ENCODE measurements at regions of chr1 and their contacts with region 1.

Region 1: GRCh38 chr1:156892190-156893047 is 1.1 kb upstream of the PEAR1 start:
- DNase-seq: peak; percentile 65 to 91 (median 86)
- ATAC-seq: peak; percentile 97
- H3K4me3 ChIP-seq: peak overlapping the region; percentile 33 to 36
- H3K4me3 Mint-ChIP-seq: peak overlapping the region; percentile 66
- H3K27ac ChIP-seq: no peak overlapping the region
- H3K27ac Mint-ChIP-seq: no peak overlapping the region
- H3K4me1 ChIP-seq: peaks cover 14% of the 10 kb centered on the region
- H3K4me1 Mint-ChIP-seq: peaks cover 13% of the 10 kb centered on the region
- H3K27me3 ChIP-seq: peaks cover 0 to 25% of the 10 kb centered on the region in 2 experiments
- H3K27me3 Mint-ChIP-seq: peaks cover 53% of the 10 kb centered on the region
- CTCF ChIP-seq: peak; percentile 61

Region 2: GRCh38 chr1:156368889-156369684 is 523.3 kb before region 1 on chr1 and contains the start of gene RHBG:
- CTCF ChIA-PET with region 1: no interaction called
- POLR2A ChIA-PET with region 1: no interaction called
- intact Hi-C with region 1: no loop called
- DNase-seq: peak in 3 of 9 experiments; percentile 19 to 32 (median 27)
- ATAC-seq: peak; percentile 40
- H3K4me3 ChIP-seq: peak within 1 kb of the TSS; percentile 9 to 24
- H3K4me3 Mint-ChIP-seq: peak within 1 kb of the TSS; percentile 73
- H3K27ac ChIP-seq: no peak within 1 kb of the TSS
- H3K27ac Mint-ChIP-seq: no peak within 1 kb of the TSS
- H3K4me1 ChIP-seq: no peaks in the 10 kb centered on the region
- H3K4me1 Mint-ChIP-seq: peaks cover 5% of the 10 kb centered on the region
- H3K27me3 ChIP-seq: peaks cover 5 to 10% of the 10 kb centered on the region in 2 experiments
- H3K27me3 Mint-ChIP-seq: peaks cover 46% of the 10 kb centered on the region
- CTCF ChIP-seq: no peak
- total RNA-seq, gene RHBG: not detected

Region 3: DNA sequence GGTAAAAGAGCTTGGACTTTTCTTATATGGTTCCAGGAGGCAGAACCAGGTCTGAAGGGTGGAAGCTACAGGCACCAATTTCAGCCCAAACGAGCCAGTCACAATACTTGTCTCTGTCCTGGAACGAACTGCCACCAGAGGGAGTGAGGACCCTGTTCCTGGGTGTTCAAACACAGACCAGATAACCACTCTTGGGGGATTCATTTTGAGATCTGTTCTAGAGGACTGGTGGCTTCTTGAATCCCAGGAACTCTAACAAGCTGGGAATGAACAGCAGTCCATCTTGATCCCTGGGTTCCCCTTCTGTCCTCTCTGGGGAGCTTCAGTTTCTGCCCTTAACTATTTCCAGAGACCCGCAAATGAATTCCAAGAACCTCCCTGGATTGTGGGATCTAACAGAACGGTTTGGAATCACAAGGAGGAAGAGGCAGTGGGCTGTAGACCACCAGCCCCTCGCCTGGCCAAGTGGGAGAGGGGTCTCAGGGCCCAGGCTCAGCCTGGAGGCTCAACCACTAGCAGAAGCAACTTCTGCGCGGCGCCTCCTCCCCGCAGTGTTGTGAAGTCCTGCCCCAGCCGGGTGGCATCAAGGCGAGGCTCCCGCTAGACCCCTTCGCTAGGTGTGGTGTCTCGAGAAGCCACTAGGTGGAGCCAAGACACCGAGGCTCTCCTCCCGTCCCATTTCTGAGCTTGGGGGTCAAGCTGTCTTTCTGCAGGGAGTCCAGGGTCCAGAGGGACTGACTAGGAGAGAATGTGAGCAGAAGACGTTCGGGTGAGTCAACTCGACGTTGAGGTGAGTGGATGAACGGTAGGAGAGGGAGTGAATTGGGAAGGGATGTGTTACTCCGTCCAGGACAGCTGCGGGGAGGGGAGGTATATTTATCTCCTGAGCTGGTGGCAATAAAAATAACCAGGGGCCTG is 203.1 kb before region 1 on chr1:
- CTCF ChIA-PET with region 1: interaction called, 15 read pairs
- POLR2A ChIA-PET with region 1: no interaction called
- intact Hi-C with region 1: no loop called
- DNase-seq: peak; percentile 55 to 85 (median 77)
- ATAC-seq: peak; percentile 97
- H3K4me3 ChIP-seq: no peak overlapping the region
- H3K4me3 Mint-ChIP-seq: no peak overlapping the region
- H3K27ac ChIP-seq: no peak overlapping the region
- H3K27ac Mint-ChIP-seq: no peak overlapping the region
- H3K4me1 ChIP-seq: peaks cover 21% of the 10 kb centered on the region
- H3K4me1 Mint-ChIP-seq: peaks cover 25% of the 10 kb centered on the region
- H3K27me3 ChIP-seq: peaks cover 18 to 19% of the 10 kb centered on the region in 2 experiments
- H3K27me3 Mint-ChIP-seq: peaks cover 41% of the 10 kb centered on the region
- CTCF ChIP-seq: peak; percentile 84

Region 4: DNA sequence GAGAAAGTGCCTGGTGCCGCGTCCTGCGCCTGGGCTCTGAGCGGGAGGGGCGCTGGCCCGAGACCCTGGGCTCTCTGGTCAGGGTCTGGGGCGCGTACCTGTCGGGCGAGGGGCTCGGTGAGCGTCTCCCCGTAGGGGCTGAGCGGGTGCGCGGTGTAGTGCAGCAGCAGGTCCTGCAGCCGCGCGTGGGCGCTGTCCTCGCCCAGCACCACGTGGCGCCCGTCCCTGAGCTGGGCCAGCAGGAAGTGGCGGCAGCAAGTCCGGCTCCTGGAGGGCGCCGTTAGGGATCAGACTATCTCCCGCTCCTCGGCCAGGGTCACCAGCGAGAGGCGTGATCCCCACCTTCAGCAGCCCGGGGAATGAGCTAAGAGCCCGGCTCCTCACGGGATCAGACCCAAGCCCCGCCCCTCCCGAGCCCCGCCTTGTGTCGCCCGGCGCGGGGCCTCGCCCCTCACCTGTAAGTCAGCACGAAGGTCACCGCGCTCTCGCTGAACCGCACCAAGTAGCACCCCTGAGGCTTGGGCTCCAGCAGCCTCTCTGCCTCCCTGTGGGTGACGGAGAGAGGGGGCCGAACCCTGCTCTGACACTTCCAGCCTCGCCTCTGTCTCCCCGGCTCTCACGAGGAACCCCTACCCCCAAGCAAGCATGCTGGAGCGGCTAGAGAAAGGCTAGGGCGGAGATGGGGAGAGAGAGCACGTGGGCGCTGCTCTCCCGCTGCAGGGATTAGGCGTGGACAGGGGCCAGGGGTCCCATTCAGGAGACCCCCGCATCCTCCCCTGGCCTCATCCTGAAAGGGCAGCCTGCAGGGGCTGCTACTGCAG is 78.5 kb before region 1 on chr1:
- CTCF ChIA-PET with region 1: interaction called, 4 read pairs
- POLR2A ChIA-PET with region 1: no interaction called
- intact Hi-C with region 1: loop called in 1 of 2 experiments (anchors 1 kb)
- DNase-seq: peak; percentile 47 to 90 (median 78)
- ATAC-seq: peak; percentile 56
- H3K4me3 ChIP-seq: peak overlapping the region; percentile 75
- H3K4me3 Mint-ChIP-seq: peak overlapping the region; percentile 84
- H3K27ac ChIP-seq: peak overlapping the region; percentile 91 to 99
- H3K27ac Mint-ChIP-seq: peak overlapping the region; percentile 99
- H3K4me1 ChIP-seq: peaks cover 53% of the 10 kb centered on the region
- H3K4me1 Mint-ChIP-seq: peaks cover 69% of the 10 kb centered on the region
- H3K27me3 ChIP-seq: no peaks in the 10 kb centered on the region
- H3K27me3 Mint-ChIP-seq: no peaks in the 10 kb centered on the region
- CTCF ChIP-seq: peak; percentile 68

Region 5: DNA sequence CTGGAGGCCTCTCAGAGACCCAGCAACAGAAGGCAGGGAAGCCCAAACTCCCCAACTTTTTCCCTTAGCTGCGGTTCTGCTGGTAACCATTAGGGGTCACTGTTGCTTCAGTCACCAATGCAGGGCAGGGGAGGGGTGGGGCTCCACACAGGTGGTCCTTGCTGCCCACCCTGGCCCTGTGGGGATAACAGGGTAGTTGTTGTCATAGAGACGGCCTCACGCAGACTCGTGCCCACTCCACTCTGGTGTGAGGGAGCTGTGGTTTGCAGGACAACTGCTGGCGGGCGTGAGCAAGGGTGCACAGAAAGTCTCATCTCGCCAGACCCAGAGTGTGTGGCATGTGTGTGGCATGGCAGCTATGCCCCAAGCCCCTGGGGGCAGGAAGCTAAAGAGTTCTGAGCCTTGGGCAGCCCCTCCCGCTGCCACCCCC is 53.4 kb before region 1 on chr1:
- CTCF ChIA-PET with region 1: interaction called, 69 read pairs
- POLR2A ChIA-PET with region 1: no interaction called
- intact Hi-C with region 1: loop called in 1 of 2 experiments (anchors 5 kb)
- DNase-seq: peak in 8 of 9 experiments; percentile 33 to 72 (median 54)
- ATAC-seq: peak; percentile 88
- H3K4me3 ChIP-seq: no peak overlapping the region
- H3K4me3 Mint-ChIP-seq: no peak overlapping the region
- H3K27ac ChIP-seq: no peak overlapping the region
- H3K27ac Mint-ChIP-seq: no peak overlapping the region
- H3K4me1 ChIP-seq: no peaks in the 10 kb centered on the region
- H3K4me1 Mint-ChIP-seq: peaks cover 2% of the 10 kb centered on the region
- H3K27me3 ChIP-seq: peaks cover 0 to 7% of the 10 kb centered on the region in 2 experiments
- H3K27me3 Mint-ChIP-seq: peaks cover 46% of the 10 kb centered on the region
- CTCF ChIP-seq: peak; percentile 88

Region 6: DNA sequence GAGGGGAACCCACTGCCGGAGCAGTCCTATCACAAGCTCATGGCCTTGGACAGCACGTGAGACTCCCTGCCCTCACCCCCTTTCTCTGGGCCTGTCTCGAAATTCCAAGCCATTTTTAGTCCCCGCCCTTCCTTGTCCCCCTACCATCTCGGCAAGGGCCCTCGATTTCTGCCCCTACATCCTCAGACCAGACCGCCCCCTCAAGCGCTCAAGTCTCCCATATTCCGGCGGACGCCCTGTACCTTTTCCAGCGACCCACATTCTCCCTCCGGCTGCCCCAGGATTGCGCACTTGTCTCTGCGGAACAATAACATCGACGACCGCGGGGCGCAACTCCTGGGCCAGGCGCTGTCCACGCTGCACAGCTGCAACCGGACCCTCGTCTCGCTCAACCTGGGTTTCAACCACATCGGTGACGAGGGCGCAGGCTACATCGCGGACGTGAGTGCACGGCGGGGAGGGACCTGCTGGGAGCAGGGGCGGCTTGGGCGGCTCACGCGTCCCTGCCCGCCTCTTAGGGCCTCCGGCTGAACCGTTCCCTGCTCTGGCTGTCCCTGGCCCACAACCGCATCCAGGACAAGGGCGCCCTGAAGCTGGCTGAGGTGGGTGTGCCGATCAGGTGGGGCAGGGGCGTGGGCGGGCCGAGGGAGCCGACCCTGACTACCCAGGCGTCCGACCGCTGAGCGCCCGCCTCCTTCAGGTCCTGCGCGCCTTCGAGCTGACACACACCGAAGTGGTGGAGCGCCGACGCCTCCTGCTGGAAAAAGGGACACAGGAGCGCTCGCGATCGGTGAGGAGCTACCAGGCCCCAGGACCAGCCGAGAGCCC is 35.0 kb after region 1 on chr1:
- CTCF ChIA-PET with region 1: interaction called, 8 read pairs
- POLR2A ChIA-PET with region 1: no interaction called
- intact Hi-C with region 1: loop called (anchors 1 kb)
- DNase-seq: peak; percentile 25 to 74 (median 61)
- ATAC-seq: peak; percentile 80
- H3K4me3 ChIP-seq: peak overlapping the region in 1 of 2 experiments; percentile 20
- H3K4me3 Mint-ChIP-seq: no peak overlapping the region
- H3K27ac ChIP-seq: no peak overlapping the region
- H3K27ac Mint-ChIP-seq: no peak overlapping the region
- H3K4me1 ChIP-seq: peaks cover 16% of the 10 kb centered on the region
- H3K4me1 Mint-ChIP-seq: peaks cover 22% of the 10 kb centered on the region
- H3K27me3 ChIP-seq: peaks cover 37 to 43% of the 10 kb centered on the region in 2 experiments
- H3K27me3 Mint-ChIP-seq: peaks cover 67% of the 10 kb centered on the region
- CTCF ChIP-seq: no peak

Region 7: DNA sequence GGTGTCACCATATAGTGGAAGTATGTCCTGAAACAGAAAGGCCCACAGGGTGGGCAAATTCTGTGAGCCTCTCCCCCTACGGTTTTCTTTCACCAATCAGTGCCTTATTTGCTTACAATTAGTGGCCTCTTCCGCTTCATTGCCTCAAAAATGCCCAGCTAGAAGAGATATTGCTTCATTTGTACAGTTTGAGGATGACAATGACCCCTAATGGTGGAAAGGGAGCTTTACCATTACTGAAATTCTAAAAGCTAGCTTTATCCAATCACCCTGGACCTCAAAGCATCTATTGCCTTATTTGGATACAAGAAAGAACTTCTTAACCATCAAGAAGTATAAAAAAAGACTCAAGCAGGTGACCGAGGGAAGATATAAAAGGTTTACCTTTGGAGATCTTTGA is 77.6 kb after region 1 on chr1:
- CTCF ChIA-PET with region 1: interaction called, 56 read pairs
- POLR2A ChIA-PET with region 1: no interaction called
- intact Hi-C with region 1: loop called in 1 of 2 experiments (anchors 2 kb)
- DNase-seq: peak in 2 of 9 experiments; percentile 10 to 15
- ATAC-seq: no peak
- H3K4me3 ChIP-seq: no peak overlapping the region
- H3K4me3 Mint-ChIP-seq: no peak overlapping the region
- H3K27ac ChIP-seq: no peak overlapping the region
- H3K27ac Mint-ChIP-seq: no peak overlapping the region
- H3K4me1 ChIP-seq: no peaks in the 10 kb centered on the region
- H3K4me1 Mint-ChIP-seq: no peaks in the 10 kb centered on the region
- H3K27me3 ChIP-seq: peaks cover 0 to 2% of the 10 kb centered on the region in 2 experiments
- H3K27me3 Mint-ChIP-seq: peaks cover 8% of the 10 kb centered on the region
- CTCF ChIP-seq: peak; percentile 18

Region 8: DNA sequence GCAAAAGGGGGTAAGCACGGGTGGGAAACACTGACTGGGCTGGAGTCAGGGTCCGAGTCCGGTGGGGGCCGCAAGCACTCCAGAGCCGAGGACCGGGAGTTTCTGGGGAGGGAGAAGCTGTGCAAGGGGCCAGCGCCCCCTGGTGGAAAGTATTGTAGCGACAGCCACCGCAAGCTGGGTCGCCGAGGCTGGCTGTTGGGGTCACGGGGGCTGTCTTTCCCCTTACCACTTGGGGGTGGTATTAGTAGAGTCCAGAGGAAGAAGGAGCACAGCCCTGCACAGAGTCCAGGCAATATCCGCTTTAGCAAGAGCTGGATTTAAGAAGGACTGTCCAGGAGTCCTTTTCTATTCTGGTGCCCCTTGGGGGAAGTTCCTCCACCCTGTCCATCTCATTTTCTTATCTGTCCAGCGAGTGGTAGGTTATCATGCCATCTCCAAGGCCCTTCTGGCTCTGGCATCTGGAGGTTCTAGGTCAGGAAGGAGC is 263.7 kb after region 1 on chr1:
- CTCF ChIA-PET with region 1: interaction called, 5 read pairs
- POLR2A ChIA-PET with region 1: no interaction called
- intact Hi-C with region 1: loop called (anchors 10 kb)
- DNase-seq: peak; percentile 58 to 88 (median 77)
- ATAC-seq: peak; percentile 59
- H3K4me3 ChIP-seq: no peak overlapping the region
- H3K4me3 Mint-ChIP-seq: peak overlapping the region; percentile 46
- H3K27ac ChIP-seq: no peak overlapping the region
- H3K27ac Mint-ChIP-seq: peak overlapping the region; percentile 24
- H3K4me1 ChIP-seq: peaks cover 18% of the 10 kb centered on the region
- H3K4me1 Mint-ChIP-seq: peaks cover 17% of the 10 kb centered on the region
- H3K27me3 ChIP-seq: peaks cover 0 to 4% of the 10 kb centered on the region in 2 experiments
- H3K27me3 Mint-ChIP-seq: peaks cover 12% of the 10 kb centered on the region
- CTCF ChIP-seq: peak; percentile 92

Measured in CD8-positive, alpha-beta T cell (primary cell).